SK-N-SH (cell line): ENCODE measurements at regions of chr2 and their contacts with region 1.

Region 1: GRCh38 chr2:20231632-20232031 is 6.7 kb upstream of the SDC1 start:
- DNase-seq: peak; percentile 33
- H3K4me3 ChIP-seq: no peak overlapping the region
- H3K27ac ChIP-seq: no peak overlapping the region
- H3K4me1 ChIP-seq: no peaks in the 10 kb centered on the region; a peak in 2 of 4 replicates
- H3K27me3 ChIP-seq: no peaks in the 10 kb centered on the region
- CTCF ChIP-seq: no peak
- EP300 ChIP-seq: peak in 1 of 2 experiments; percentile 28; a peak in 1 of 4 replicates
- RAD21 ChIP-seq: no peak

Region 2: GRCh38 chr2:20242060-20243006 is 10.7 kb after region 1 on chr2:
- CTCF ChIA-PET with region 1: interaction called, 10 read pairs
- POLR2A ChIA-PET with region 1: no interaction called
- DNase-seq: peak; percentile 72
- H3K4me3 ChIP-seq: no peak overlapping the region
- H3K27ac ChIP-seq: no peak overlapping the region
- H3K4me1 ChIP-seq: no peaks in the 10 kb centered on the region
- H3K27me3 ChIP-seq: no peaks in the 10 kb centered on the region
- CTCF ChIP-seq: peak; percentile 34; the same call in 1 of the 2 replicates
- EP300 ChIP-seq: no peak
- RAD21 ChIP-seq: no peak